ENCODE measurements at regions of chr12 and their contacts with region 1.

Region 1: DNA sequence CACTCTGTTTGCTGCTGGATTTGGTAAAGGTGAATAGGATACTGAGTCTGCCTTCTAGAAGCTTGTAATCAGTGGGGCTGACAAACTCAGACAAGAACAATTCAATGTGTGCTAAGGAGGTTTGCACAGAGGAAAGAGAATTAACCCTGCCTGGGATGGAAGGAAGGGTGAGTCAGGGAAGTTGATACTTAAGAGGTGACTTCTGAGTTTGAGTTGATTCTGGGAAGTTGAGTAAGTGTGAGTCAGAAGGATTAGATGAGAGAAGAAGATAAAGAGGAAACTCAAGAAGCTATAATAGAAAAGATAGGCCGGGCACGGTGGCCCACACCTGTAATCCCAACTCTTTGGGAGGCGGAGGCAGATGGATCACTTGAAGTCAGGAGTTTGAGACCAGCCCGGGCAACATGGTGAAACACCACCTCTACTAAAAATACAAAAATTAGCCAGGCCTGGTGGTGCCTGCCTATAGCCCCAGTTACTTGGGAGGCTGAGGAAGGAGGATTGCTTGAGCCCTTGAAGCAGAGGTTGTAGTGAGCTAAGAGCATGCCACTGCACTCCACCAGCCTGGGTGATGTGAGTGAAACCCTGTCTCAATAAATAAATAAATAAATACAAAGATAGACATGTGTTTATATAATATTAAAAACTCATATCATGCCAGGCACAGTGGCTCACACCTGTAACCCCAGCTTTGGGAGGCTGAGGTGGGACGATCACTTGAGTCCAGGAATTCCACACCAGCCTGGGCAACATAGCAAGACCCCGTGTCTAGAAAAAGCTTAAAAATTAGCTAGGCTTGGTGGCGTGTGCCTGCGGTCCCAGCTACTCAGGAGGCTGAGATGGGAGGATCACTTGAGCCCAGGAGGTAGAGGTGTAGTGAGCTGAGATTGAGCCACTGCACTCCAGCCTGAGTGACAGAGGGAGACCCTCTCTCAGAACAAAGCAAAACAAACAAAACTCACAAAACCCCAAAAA is 126.8 kb upstream of the CPM start:
- DNase-seq: no peak
- H3K4me3 Mint-ChIP-seq: no peak overlapping the region
- H3K27ac Mint-ChIP-seq: peak overlapping the region; percentile 36
- H3K4me1 Mint-ChIP-seq: peaks cover 27% of the 10 kb centered on the region
- H3K27me3 Mint-ChIP-seq: no peaks in the 10 kb centered on the region

Region 2: DNA sequence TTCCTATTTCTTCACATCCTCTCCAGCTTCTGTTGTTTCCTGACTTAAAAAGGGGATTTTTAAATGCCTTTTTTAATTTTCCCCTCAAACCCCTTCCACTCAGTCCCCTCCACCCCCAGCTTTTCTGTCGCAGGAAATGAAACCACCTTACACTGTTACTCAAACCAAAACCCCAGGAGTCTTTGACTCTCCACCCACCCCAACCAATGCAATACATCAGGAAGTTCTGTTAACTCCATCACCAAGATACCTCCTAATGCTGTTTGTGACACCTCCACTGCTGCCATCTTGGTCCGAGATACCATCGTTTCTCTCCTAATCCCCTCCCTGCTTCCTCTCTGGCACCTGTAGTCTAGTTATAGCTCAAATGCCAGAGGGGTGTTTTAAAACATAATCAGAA is 101.4 kb before region 1 on chr12:
- intact Hi-C with region 1: loop called (anchors 2 kb)
- DNase-seq: peak; percentile 38
- H3K4me3 Mint-ChIP-seq: peak overlapping the region; percentile 3
- H3K27ac Mint-ChIP-seq: peak overlapping the region; percentile 89
- H3K4me1 Mint-ChIP-seq: peaks cover 45% of the 10 kb centered on the region
- H3K27me3 Mint-ChIP-seq: no peaks in the 10 kb centered on the region

Region 3: DNA sequence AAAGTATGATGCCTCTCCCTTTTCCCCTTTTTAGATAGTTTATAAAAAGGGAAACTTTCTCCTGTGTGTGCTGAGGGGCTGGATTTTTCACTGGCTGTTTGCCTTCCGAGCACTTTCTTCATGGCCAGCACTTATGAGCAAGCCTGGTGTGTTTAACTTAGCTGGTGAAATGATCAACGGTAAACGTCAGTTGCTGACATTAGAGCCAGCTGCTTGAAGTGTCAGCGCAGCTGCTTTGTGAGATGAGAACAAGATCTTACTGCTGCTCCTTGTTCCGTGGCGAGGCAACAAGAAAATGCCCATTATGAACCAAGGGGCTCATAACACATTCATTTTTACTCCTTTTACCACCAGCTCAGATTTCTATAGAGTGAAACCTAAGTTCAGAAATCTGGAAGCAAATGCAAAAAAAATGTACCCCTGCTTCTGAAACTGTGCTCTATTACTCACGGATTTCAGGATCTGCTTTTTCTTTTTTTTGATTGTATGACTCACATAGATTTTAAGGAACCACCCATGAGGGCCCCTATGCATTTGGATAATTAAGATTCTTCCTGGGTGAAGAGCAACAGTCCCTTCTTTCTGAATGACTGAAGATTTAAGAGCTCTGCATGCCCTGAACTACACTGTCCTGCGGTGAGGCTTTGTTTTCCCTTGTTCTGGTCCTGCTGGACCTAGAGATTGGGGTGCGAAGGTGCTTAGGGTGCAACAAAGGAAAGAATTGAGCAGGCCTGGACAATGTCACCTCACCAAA is 52.5 kb before region 1 on chr12:
- intact Hi-C with region 1: loop called (anchors 5 kb)
- DNase-seq: no peak
- H3K4me3 Mint-ChIP-seq: no peak overlapping the region
- H3K27ac Mint-ChIP-seq: no peak overlapping the region
- H3K4me1 Mint-ChIP-seq: peaks cover 7% of the 10 kb centered on the region
- H3K27me3 Mint-ChIP-seq: peaks cover 3% of the 10 kb centered on the region

Region 4: DNA sequence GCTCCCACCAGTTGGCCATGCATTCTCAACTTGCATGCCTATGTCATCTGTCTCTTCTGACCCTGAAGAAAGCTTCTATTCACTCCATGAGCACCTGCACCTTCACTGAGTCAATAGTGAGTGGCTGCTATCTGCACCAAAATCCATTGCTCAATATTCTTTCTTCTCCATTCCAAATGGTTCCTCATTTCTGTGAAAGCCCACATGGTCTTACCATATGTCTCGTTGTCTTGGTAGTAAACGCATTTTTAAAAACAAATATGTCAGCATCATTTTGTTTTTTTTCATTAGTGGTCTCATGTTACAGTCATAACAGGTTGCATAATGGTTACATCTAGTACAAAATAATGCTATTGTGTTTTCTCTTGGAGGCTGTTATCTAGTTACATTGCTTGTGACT is 19.9 kb before region 1 on chr12:
- intact Hi-C with region 1: no loop called
- DNase-seq: no peak
- H3K4me3 Mint-ChIP-seq: no peak overlapping the region
- H3K27ac Mint-ChIP-seq: no peak overlapping the region
- H3K4me1 Mint-ChIP-seq: peaks cover under 1% of the 10 kb centered on the region
- H3K27me3 Mint-ChIP-seq: peaks cover 1% of the 10 kb centered on the region

Region 5: GRCh38 chr12:69623970-69624369 is 564.2 kb after region 1 on chr12:
- intact Hi-C with region 1: no loop called
- DNase-seq: no peak
- H3K4me3 Mint-ChIP-seq: no peak overlapping the region
- H3K27ac Mint-ChIP-seq: no peak overlapping the region
- H3K4me1 Mint-ChIP-seq: no peaks in the 10 kb centered on the region
- H3K27me3 Mint-ChIP-seq: peaks cover 1% of the 10 kb centered on the region

Measured in activated T-helper 2 cell treated with anti-CD3 and anti-CD28 coated beads, Interferon-gamma antibody, Interleukin-2, Interleukin-4, amounts not matched to agents 10 μg/mL and 5 μg/mL and 100 μg/mL, durations not matched to agents 14 hours and 24 hours and 36 hours (primary cell).